ENCODE measurements at regions of chr7 and their contacts with region 1.

Region 1: DNA sequence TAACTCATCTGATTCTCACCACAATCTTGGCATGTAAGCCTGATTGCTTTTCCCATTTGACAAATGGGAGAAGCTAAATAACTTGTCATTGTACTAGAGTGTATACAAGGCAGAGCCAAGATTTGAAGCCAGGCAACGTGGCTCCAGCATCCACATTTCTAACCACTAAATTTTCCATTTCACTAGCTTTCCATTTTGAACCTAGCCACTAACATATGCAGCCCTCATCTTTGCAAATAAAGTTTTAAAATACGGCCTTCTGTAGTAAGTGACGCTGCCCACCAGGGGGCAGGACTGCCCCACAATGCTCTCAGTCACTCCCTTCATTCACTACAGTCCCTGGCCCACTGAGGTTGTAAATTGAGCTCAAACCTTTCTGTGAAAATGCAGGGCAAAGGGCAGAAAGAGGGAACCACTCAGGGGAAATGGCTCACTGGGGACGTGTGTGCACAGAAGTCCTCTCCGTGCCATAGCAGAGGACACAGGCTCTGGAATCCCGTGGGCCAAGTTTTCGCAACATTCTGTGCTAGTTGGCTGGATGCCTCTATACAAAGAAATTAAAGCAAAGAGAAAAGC is 315.7 kb downstream of the TNS3 start:
- DNase-seq: peak; percentile 82
- ATAC-seq: peak; percentile 93
- H3K4me3 ChIP-seq: peak overlapping the region in 1 of 3 experiments; percentile 15; a peak in 1 of 6 replicates
- H3K27ac ChIP-seq: peak overlapping the region; percentile 50
- H3K4me1 ChIP-seq: peaks cover 14% of the 10 kb centered on the region
- H3K27me3 ChIP-seq: no peaks in the 10 kb centered on the region
- CTCF ChIP-seq: peak; percentile 93
- EP300 ChIP-seq: no peak
- POLR2A ChIP-seq: no peak
- RAD21 ChIP-seq: peak; percentile 91

Region 2: GRCh38 chr7:47153076-47153475 is 113.1 kb before region 1 on chr7:
- CTCF ChIA-PET with region 1: no interaction called
- POLR2A ChIA-PET with region 1: no interaction called
- in situ Hi-C with region 1: no loop called
- intact Hi-C with region 1: no loop called
- DNase-seq: peak; percentile 66
- ATAC-seq: no peak
- H3K4me3 ChIP-seq: no peak overlapping the region
- H3K27ac ChIP-seq: no peak overlapping the region
- H3K4me1 ChIP-seq: peaks cover 48% of the 10 kb centered on the region
- H3K27me3 ChIP-seq: 0 out of 5 replicates have a peak, but pooled peaks cover 0 to 3% of the 10 kb centered on the region in 2 experiments
- CTCF ChIP-seq: no peak
- EP300 ChIP-seq: peak in 1 of 2 experiments; percentile 37; a peak in 2 of 4 replicates
- POLR2A ChIP-seq: no peak
- RAD21 ChIP-seq: no peak

Region 3: DNA sequence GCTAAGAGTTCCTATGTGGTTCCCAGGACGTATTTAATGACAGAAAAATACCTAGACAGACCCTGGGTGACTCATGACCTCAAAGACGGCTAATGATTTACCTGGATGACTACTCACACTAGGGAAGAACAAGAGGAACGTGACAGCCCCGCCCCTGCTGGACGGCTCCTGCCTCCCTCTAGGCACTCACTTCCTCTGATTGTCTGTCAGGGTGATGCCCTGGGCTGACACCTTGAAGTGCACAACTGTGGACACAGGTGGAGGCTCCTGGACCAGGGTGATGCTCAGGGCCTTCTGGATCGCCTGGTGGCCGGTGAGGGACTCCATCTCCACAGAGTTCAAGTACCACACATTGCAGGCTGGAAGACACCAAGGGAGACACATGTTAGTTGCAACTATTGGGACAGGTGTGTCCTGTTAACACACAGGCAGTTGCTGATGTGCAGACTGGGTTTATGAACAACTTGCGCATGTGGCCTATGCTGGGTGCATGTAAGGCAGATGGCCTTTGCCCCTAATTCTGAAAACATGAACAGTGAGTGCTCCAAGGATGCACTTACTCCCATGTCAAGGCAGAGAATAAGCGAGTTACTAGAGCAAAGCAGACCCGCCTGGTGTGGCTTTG is 17.4 kb after region 1 on chr7:
- CTCF ChIA-PET with region 1: no interaction called
- POLR2A ChIA-PET with region 1: no interaction called
- in situ Hi-C with region 1: no loop called
- intact Hi-C with region 1: loop called (anchors 2 kb)
- DNase-seq: peak; percentile 84
- ATAC-seq: peak; percentile 92
- H3K4me3 ChIP-seq: no peak overlapping the region
- H3K27ac ChIP-seq: no peak overlapping the region
- H3K4me1 ChIP-seq: peaks cover 24% of the 10 kb centered on the region
- H3K27me3 ChIP-seq: no peaks in the 10 kb centered on the region
- CTCF ChIP-seq: peak; percentile 4; the same call in 1 of the 2 replicates
- EP300 ChIP-seq: no peak; a peak in 1 of 4 replicates
- POLR2A ChIP-seq: no peak
- RAD21 ChIP-seq: no peak

Region 4: DNA sequence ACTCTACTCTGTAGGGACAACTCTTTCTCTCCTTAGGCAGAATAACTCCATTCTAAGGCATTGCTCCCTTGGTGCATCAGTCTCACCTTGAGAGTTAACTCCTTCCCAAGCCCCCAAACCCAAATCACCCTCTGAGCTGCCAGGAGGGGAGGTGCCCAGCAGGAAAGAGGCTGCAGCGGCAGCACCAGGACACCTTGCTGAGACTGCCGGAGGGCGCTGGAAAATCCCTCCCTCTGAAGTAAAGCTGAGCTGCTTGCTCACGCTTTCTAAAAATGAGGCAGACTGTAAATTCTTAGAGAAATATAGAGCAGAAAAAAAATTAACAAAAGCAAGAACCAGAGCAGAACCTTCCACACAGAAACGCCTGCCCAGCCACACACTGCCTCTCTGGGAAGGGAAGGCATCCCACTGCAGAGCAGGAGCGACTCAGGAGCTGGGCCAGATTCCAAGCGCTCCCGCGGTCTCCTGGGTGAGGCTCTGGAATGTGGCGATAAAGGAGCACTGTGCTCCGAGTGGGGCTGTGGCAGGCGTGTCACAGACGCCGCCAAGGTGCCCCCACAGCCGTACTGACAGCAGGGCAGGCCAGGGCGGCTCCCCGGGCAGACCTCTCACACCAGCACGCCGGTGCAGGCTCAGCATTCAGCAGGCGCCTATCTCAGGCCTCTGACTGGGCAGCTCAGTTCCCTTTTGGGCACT is 113.6 kb after region 1 on chr7:
- CTCF ChIA-PET with region 1: no interaction called
- POLR2A ChIA-PET with region 1: no interaction called
- in situ Hi-C with region 1: no loop called
- intact Hi-C with region 1: loop called (anchors 10 kb)
- DNase-seq: no peak
- ATAC-seq: peak; percentile 8; the same call in 2 of the 3 replicates
- H3K4me3 ChIP-seq: no peak overlapping the region
- H3K27ac ChIP-seq: peak overlapping the region; percentile 13
- H3K4me1 ChIP-seq: peaks cover 45% of the 10 kb centered on the region
- H3K27me3 ChIP-seq: no peaks in the 10 kb centered on the region
- CTCF ChIP-seq: no peak
- EP300 ChIP-seq: no peak
- POLR2A ChIP-seq: no peak
- RAD21 ChIP-seq: no peak

Region 5: GRCh38 chr7:47818796-47819606 is 552.8 kb after region 1 on chr7:
- CTCF ChIA-PET with region 1: no interaction called
- POLR2A ChIA-PET with region 1: no interaction called
- in situ Hi-C with region 1: no loop called
- intact Hi-C with region 1: loop called (anchors 1 kb)
- DNase-seq: peak; percentile 70
- ATAC-seq: peak; percentile 83
- H3K4me3 ChIP-seq: no peak overlapping the region
- H3K27ac ChIP-seq: no peak overlapping the region
- H3K4me1 ChIP-seq: peaks cover 20% of the 10 kb centered on the region
- H3K27me3 ChIP-seq: no peaks in the 10 kb centered on the region
- CTCF ChIP-seq: peak; percentile 91
- EP300 ChIP-seq: no peak
- POLR2A ChIP-seq: no peak
- RAD21 ChIP-seq: peak; percentile 90

Region 6: DNA sequence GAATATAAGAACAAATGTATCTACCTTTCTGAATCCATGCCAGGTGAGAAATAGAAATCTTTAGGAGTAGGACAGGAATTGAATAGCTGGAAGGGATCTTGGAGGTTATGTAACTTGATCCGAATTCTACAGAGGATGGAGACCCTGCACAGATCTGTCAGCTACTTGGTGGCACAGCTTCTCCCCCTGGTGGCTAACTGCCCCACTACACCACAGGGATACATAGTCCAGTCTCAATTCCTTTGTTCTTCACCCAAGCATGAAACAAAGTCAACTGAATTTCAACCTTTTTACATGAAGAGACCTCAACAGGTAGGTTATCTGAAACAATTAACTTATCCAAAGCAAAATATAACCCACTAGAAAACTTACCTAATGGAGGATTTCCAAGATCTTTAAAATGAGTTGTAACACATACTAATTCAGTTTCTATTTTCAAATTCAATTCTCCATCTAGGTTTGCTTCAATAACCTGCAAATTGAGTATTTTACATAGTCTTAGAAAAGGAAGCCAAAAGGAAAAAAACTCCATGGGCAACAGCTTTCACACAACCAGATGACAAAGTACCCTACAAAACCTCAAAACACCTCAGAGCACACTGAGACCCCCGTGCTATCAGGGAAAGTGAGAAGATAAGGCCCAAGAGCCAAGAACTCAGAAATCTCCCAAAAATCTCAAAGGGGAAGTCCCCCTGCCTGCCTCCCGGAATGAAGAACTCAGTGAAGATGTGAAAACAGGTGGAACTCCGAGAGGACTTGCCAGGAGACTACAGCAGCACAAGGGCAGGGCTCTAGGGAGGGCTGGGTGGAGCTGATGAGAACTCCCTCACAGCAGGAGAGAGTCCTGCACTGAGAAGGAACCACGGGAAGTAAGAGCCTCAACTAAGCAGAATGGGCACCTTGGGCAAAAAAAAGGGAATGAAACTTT is 702.9 kb after region 1 on chr7:
- CTCF ChIA-PET with region 1: no interaction called
- POLR2A ChIA-PET with region 1: no interaction called
- in situ Hi-C with region 1: no loop called
- intact Hi-C with region 1: loop called (anchors 2 kb)
- DNase-seq: peak; percentile 53
- ATAC-seq: peak; percentile 96
- H3K4me3 ChIP-seq: no peak overlapping the region
- H3K27ac ChIP-seq: no peak overlapping the region
- H3K4me1 ChIP-seq: no peaks in the 10 kb centered on the region
- H3K27me3 ChIP-seq: no peaks in the 10 kb centered on the region
- CTCF ChIP-seq: peak; percentile 85
- EP300 ChIP-seq: no peak
- POLR2A ChIP-seq: no peak
- RAD21 ChIP-seq: peak; percentile 70

Measured in HepG2 (cell line).